MCF 10A (cell line): ENCODE measurements at regions of chr5 and their contacts with region 1.

Region 1: GRCh38 chr5:91928754-91929521 is 545.8 kb upstream of the ARRDC3 start:
- DNase-seq: peak; percentile 11
- H3K4me3 Mint-ChIP-seq: no peak overlapping the region
- H3K27ac Mint-ChIP-seq: no peak overlapping the region
- H3K4me1 Mint-ChIP-seq: no peaks in the 10 kb centered on the region
- H3K27me3 Mint-ChIP-seq: peaks cover 52% of the 10 kb centered on the region
- CTCF ChIP-seq: peak; percentile 31

Region 2: DNA sequence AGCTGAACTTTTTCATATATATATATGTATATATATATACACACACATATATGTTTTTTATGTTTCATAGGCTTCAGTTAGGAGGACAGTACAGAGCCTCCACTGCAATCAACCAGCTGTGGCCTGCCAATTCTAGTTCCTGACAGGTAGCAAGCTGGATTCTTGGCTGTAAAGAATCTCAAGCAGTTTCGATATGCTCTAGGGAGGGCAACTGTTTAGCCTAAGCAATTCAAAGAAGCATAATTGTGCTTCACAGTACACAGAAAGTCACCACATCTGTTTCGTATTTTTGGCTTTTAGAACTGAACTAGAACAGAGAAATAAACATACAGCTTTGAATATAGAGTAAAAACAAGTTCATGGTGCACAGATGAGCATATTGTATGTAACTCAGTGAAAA is 393.4 kb before region 1 on chr5:
- CTCF ChIA-PET with region 1: no interaction called
- POLR2A ChIA-PET with region 1: no interaction called
- intact Hi-C with region 1: no loop called
- DNase-seq: no peak
- H3K4me3 Mint-ChIP-seq: no peak overlapping the region
- H3K27ac Mint-ChIP-seq: no peak overlapping the region
- H3K4me1 Mint-ChIP-seq: no peaks in the 10 kb centered on the region
- H3K27me3 Mint-ChIP-seq: no peaks in the 10 kb centered on the region
- CTCF ChIP-seq: no peak

Region 3: GRCh38 chr5:91641730-91642350 is 287.1 kb before region 1 on chr5:
- CTCF ChIA-PET with region 1: interaction called, 5 read pairs
- POLR2A ChIA-PET with region 1: no interaction called
- intact Hi-C with region 1: loop called (anchors 10 kb)
- DNase-seq: peak; percentile 60
- H3K4me3 Mint-ChIP-seq: no peak overlapping the region
- H3K27ac Mint-ChIP-seq: no peak overlapping the region
- H3K4me1 Mint-ChIP-seq: no peaks in the 10 kb centered on the region
- H3K27me3 Mint-ChIP-seq: peaks cover 59% of the 10 kb centered on the region
- CTCF ChIP-seq: peak; percentile 35

Region 4: DNA sequence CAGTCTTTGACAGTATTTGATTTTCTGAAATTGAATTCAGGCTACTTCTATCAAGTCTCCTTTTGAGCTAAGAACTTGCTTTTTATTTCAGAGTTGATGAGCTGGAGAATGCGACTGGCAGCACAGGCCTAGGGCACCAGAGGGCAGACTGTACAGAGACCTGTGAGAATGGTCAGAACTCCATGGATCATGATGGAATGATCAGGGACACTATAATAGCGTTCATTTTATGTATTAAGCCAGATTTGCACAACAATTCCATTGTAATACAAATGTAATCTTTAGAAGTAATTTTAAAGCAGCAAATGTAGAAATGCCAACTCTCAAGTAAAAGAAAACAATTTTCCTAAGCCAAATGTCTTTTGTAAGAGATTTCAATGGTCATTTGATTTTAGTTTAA is 749.7 kb after region 1 on chr5:
- CTCF ChIA-PET with region 1: no interaction called
- POLR2A ChIA-PET with region 1: no interaction called
- intact Hi-C with region 1: no loop called
- DNase-seq: peak; percentile 24
- H3K4me3 Mint-ChIP-seq: no peak overlapping the region
- H3K27ac Mint-ChIP-seq: no peak overlapping the region
- H3K4me1 Mint-ChIP-seq: no peaks in the 10 kb centered on the region
- H3K27me3 Mint-ChIP-seq: no peaks in the 10 kb centered on the region
- CTCF ChIP-seq: no peak

Region 5: GRCh38 chr5:93915142-93915553 is 1986.2 kb after region 1 on chr5:
- CTCF ChIA-PET with region 1: no interaction called
- POLR2A ChIA-PET with region 1: no interaction called
- intact Hi-C with region 1: loop called (anchors 10 kb)
- DNase-seq: peak; percentile 45
- H3K4me3 Mint-ChIP-seq: no peak overlapping the region
- H3K27ac Mint-ChIP-seq: no peak overlapping the region
- H3K4me1 Mint-ChIP-seq: no peaks in the 10 kb centered on the region
- H3K27me3 Mint-ChIP-seq: no peaks in the 10 kb centered on the region
- CTCF ChIP-seq: peak; percentile 48